CD4-positive, alpha-beta T cell (primary cell): ENCODE measurements at regions of chr9 and their contacts with region 1.

Region 1: DNA sequence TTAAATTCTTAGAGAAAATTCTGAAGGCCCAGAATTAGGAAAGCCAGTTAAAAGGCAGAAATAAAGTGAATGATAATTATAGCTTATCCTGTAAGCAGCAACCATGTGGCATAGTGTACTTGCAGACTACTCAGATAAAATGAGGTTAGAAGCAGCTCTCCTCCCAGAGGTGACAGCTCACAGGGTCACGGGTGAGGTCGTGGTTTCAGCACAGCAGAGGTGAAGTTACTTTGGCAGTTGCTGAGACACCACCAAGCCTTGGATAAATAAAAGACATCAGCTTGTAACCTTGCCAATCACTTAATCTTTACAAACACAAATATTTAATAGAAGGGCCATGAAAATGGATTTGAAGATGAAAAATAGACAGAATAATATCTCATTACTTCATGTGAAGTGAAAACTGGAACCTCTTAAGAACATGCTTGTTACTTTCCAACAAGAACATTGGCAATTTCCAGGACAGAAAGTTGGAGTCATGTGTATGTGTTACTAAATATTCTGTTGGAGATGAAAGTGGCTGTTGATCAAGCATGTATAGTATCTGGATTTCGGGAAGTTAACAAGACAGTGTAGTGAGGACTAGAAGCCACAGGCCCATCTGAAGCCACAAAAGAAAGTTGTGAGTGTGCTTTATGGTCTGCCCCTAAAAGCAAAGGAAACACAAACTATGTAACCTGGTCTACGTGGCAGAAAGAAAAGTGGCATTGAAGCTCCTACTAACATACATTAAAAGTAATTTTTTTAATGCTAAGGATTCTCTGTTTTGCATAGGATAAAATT is 134.4 kb downstream of the ERCC6L2 start:
- DNase-seq: peak; percentile 38 to 86 (median 48)
- ATAC-seq: peak; percentile 76
- H3K4me3 ChIP-seq: no peak overlapping the region
- H3K4me3 Mint-ChIP-seq: peak overlapping the region; percentile 31
- H3K27ac ChIP-seq: peak overlapping the region; percentile 49 to 58
- H3K27ac Mint-ChIP-seq: peak overlapping the region; percentile 89
- H3K4me1 ChIP-seq: peaks cover 46% of the 10 kb centered on the region
- H3K4me1 Mint-ChIP-seq: peaks cover 52% of the 10 kb centered on the region
- H3K27me3 ChIP-seq: no peaks in the 10 kb centered on the region
- H3K27me3 Mint-ChIP-seq: no peaks in the 10 kb centered on the region
- CTCF ChIP-seq: no peak

Region 2: DNA sequence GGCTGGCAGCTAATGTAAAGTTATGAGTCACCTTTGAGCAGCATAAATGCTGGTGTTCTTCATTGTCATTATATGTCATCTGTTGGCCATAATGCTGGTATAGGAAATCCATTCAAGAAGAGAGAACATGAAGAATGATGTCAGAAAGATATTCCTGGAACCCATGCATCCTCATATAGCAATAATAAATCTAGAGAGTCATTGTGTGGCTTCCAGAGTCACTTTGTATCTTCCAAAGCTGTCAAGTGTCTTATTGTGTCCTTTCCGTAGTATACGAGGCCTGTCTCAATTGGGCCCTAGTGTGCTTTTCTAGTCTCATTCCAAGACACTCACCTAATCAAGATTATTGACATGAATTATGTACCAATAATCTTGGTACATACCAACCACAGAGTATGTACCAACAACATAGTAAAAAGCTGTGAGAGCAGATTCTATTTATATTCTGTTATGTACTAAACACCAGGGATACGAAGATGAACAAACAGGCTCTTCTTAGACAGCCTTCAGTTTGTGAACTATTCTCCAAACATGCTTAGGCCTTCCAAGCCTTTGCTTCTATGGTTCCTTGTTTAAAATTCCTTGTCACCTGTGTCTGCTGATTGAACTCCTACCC is 24.3 kb before region 1 on chr9:
- CTCF ChIA-PET with region 1: no interaction called
- POLR2A ChIA-PET with region 1: no interaction called
- intact Hi-C with region 1: loop called in 1 of 2 experiments (anchors 2 kb)
- DNase-seq: no peak
- ATAC-seq: no peak
- H3K4me3 ChIP-seq: no peak overlapping the region
- H3K4me3 Mint-ChIP-seq: no peak overlapping the region
- H3K27ac ChIP-seq: no peak overlapping the region
- H3K27ac Mint-ChIP-seq: no peak overlapping the region
- H3K4me1 ChIP-seq: peaks cover 3% of the 10 kb centered on the region
- H3K4me1 Mint-ChIP-seq: peaks cover 17% of the 10 kb centered on the region
- H3K27me3 ChIP-seq: no peaks in the 10 kb centered on the region
- H3K27me3 Mint-ChIP-seq: no peaks in the 10 kb centered on the region
- CTCF ChIP-seq: no peak

Region 3: DNA sequence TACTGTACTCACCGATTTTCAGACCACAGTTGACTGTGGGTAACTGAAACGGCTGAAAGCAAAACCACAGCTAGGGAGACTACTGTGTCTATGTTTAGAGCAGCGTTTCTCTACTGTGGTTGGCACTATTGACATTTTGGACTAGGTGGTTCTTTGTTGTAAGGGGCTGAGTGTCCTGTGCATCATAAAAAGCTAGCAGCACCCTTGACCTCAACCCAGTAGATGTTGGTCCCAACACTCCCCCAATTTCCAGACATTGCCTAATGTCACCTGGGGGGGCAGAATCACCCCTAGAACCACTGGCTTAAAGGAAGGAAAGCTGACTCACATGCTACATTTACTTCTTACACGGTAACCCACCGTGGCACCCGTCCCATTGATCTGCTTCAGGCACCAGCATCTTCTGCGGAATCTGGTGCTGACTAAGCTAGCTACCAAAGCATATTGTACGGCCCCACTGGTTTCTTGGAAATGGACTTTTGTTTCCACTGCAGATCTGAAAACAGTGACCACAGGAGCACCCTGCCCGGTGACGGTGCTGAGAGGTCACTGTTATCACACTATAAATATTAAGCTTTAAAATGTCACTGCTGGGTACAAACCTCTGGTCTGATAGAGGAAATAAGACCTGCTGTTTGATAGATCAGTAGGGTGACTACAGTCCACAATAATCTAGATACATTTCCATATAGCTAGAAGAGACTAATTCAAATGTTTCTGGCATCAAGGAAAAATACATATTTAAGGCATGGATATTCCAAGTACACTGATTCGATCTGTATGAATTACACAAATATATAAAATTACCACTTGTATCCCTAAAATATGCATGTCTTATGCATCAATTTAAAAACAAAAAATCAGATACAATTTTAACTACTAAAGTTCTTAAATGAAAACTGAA is 140.7 kb after region 1 on chr9:
- CTCF ChIA-PET with region 1: no interaction called
- POLR2A ChIA-PET with region 1: no interaction called
- intact Hi-C with region 1: loop called in 1 of 2 experiments (anchors 10 kb)
- DNase-seq: peak in 11 of 14 experiments; percentile 4 to 59 (median 23)
- ATAC-seq: peak; percentile 62
- H3K4me3 ChIP-seq: no peak overlapping the region
- H3K4me3 Mint-ChIP-seq: peak overlapping the region; percentile 18
- H3K27ac ChIP-seq: no peak overlapping the region
- H3K27ac Mint-ChIP-seq: no peak overlapping the region
- H3K4me1 ChIP-seq: peaks cover 17% of the 10 kb centered on the region
- H3K4me1 Mint-ChIP-seq: peaks cover 24% of the 10 kb centered on the region
- H3K27me3 ChIP-seq: peaks cover 0 to 4% of the 10 kb centered on the region in 2 experiments
- H3K27me3 Mint-ChIP-seq: peaks cover 25% of the 10 kb centered on the region
- CTCF ChIP-seq: no peak